ENCODE measurements at regions of chr19 and their contacts with region 1.

Region 1: GRCh38 chr19:44770550-44771257 is 7.0 kb upstream of the CBLC start:
- DNase-seq: peak; percentile 92 to 98 (median 97)
- ATAC-seq: peak; percentile 98 to 99
- H3K4me3 Mint-ChIP-seq: peak overlapping the region; percentile 35 to 81 (median 65)
- H3K27ac Mint-ChIP-seq: peak overlapping the region; percentile 70 to 93 (median 87)
- H3K4me1 Mint-ChIP-seq: peaks cover 9 to 33% (median 30%) of the 10 kb centered on the region in 4 donors
- H3K27me3 Mint-ChIP-seq: no peaks in the 10 kb centered on the region

Region 2: DNA sequence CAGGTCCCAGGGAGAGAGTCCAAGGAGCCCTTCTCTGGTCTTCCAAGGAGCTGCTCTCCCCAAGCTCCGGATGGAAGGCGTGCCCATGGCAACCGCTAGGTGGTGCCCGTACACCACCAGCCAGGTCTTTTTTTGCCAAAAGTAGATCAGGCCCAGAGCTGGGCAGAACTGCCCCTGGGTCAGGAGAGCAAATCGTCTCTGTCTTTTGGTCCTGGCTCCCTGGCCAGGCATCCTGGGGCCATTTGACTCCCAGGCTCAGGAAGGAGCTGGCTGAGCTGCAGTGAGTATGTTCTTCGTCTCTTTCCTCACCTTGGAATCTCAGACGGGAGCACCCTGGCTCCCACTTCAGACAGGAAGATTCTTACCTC is 46.8 kb before region 1 on chr19:
- POLR2A ChIA-PET with region 1: interaction called, 41 read pairs
- DNase-seq: peak; percentile 59 to 87 (median 78)
- ATAC-seq: peak; percentile 79 to 97
- H3K4me3 Mint-ChIP-seq: no peak overlapping the region
- H3K27ac Mint-ChIP-seq: peak overlapping the region in 7 of 10 donors; percentile 2 to 69 (median 48)
- H3K4me1 Mint-ChIP-seq: peaks cover 20 to 44% (median 43%) of the 10 kb centered on the region in 4 donors
- H3K27me3 Mint-ChIP-seq: no peaks in the 10 kb centered on the region

Region 3: DNA sequence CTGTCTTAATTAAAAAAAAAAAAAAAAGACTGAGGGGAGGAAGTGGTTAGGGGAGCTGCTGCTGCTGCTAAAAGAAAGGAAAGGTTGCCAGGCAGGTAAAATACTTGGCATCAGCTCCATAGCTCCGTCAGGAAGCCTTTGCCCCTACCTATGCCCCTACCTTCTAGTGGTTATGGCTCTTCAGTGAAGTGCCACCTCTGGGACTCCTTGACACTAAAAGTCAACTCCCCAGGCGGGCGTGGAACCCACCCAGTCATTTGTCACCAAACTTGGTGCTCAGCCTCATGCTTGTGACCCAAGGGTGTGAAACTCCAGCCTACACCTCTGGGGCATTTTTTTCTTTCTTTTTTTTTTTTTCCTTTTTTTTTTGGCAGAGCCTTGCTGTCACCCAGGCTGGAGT is 70.5 kb after region 1 on chr19:
- POLR2A ChIA-PET with region 1: no interaction called
- DNase-seq: peak in 2 of 10 donors; percentile 11 to 18
- ATAC-seq: no peak
- H3K4me3 Mint-ChIP-seq: no peak overlapping the region
- H3K27ac Mint-ChIP-seq: peak overlapping the region in 1 of 10 donors; percentile 38
- H3K4me1 Mint-ChIP-seq: peaks cover 7 to 24% (median 21%) of the 10 kb centered on the region in 4 donors
- H3K27me3 Mint-ChIP-seq: peaks cover 5 to 15% (median 9%) of the 10 kb centered on the region in 5 donors